HEK293 (cell line): ENCODE measurements at regions of chr7 and their contacts with region 1.

Region 1: DNA sequence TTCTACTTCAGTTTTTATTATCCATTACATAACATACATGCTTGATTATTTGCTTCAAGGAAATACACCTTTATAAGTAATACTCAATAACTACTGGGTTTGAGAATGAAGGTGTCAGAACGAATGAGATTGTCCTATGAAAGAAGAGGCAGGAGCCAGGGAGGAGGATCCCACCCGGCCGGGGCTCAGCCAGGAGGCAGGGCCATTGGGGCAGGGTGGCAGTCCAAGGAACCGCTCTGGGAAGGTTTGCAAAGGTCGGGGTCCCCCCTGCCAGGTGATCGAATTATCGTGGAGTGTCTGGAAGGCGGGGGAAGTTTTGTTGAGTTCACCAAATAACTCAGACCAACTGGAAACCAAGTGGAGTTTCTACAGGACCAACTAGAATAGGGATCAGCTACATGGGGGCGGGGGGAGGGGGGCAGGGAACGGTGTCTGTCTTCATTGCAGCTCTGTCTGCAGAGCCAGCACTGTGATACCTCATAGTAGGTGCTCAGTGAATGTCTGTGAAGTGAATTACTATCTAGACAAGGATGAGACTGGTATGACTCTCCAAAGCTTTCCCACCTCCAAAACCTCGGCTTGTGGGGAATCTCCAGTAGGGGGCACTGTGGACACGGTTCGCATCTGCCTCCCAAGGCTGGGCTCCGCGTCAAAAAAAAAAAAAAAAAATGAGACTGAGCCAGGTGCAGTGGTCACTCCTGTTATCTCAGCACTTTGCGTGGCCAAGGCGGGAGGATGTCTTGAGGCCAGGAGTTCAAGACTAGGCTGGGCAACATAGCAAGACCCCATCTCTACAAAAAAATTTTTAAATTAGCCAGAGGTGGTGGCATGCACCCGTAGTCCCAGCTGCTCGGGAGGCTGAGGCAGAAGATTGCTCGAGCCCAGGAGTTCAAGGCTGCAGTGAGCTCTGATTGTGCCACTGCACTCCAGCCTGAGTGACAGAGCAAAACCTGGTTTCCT is 9.4 kb downstream of the TRIM56 start:
- H3K4me3 ChIP-seq: no peak overlapping the region
- H3K27ac ChIP-seq: no peak overlapping the region
- H3K4me1 ChIP-seq: no peaks in the 10 kb centered on the region
- CTCF ChIP-seq: peak; percentile 65; the same call in 1 of the 2 replicates

Region 2: GRCh38 chr7:101077303-101078089 is 17.2 kb before region 1 on chr7:
- CTCF ChIA-PET with region 1: interaction called, 10 read pairs
- POLR2A ChIA-PET with region 1: no interaction called
- H3K4me3 ChIP-seq: no peak overlapping the region
- H3K27ac ChIP-seq: no peak overlapping the region
- H3K4me1 ChIP-seq: no peaks in the 10 kb centered on the region
- CTCF ChIP-seq: peak; percentile 97